Activated T-helper 2 cell treated with anti-CD3 and anti-CD28 coated beads, Interferon-gamma antibody, Interleukin-2, Interleukin-4, amounts not matched to agents 10 μg/mL and 5 μg/mL and 100 μg/mL, durations not matched to agents 14 hours and 24 hours and 36 hours (primary cell): ENCODE measurements at regions of chr3 and their contacts with region 1.

Region 1: DNA sequence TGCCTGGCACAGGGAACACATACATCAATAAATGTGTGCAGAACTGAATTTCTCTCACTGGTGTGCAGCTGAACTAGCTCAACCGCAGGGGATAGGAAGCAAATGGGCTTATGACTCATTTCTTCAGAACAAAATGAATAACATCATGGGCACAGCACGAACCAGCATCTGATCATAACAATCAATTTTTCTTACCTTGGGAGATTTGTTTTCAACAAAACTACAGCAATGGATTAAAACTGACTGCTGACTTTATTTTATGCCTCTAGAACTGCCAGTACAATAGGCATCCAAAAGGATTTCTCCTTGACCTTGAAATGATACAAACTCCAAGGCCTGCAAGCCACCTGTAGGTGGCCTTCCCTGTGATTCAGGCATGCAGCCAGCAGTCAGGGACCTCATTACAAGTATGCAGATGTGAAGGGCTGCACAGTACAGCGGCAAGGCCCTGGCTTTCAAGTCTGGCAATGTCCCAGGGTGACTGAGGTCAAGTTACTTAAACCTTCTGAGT is 26.1 kb downstream of the TAMM41 start:
- DNase-seq: peak; percentile 15
- H3K4me3 Mint-ChIP-seq: peak overlapping the region; percentile 57
- H3K27ac Mint-ChIP-seq: peak overlapping the region; percentile 47
- H3K4me1 Mint-ChIP-seq: peaks cover 34% of the 10 kb centered on the region
- H3K27me3 Mint-ChIP-seq: no peaks in the 10 kb centered on the region

Region 2: DNA sequence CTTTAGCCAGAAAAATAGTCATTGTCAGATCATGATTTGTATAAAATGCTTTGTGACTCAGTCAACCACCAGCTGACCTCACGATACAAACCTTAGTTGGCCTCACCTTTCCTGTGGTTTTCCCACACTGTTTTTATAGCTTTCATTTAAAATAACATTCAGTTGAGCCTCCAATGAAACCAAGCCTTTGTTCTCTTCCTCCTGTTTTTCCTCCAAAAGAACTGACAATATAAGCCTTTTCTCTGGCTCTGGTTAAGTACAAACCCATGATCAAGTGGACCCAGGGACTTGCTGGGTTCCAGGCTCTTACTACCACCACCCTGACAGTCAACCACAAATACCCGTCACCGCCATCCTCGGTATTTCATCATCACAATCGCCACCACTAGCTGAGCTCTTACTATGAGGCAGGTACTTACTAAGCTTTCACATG is 55.6 kb before region 1 on chr3:
- intact Hi-C with region 1: loop called (anchors 2 kb)
- DNase-seq: peak; percentile 27
- H3K4me3 Mint-ChIP-seq: peak overlapping the region; percentile 13
- H3K27ac Mint-ChIP-seq: peak overlapping the region; percentile 74
- H3K4me1 Mint-ChIP-seq: peaks cover 20% of the 10 kb centered on the region
- H3K27me3 Mint-ChIP-seq: no peaks in the 10 kb centered on the region